ENCODE measurements at regions of chr12 and their contacts with region 1.

Region 1: DNA sequence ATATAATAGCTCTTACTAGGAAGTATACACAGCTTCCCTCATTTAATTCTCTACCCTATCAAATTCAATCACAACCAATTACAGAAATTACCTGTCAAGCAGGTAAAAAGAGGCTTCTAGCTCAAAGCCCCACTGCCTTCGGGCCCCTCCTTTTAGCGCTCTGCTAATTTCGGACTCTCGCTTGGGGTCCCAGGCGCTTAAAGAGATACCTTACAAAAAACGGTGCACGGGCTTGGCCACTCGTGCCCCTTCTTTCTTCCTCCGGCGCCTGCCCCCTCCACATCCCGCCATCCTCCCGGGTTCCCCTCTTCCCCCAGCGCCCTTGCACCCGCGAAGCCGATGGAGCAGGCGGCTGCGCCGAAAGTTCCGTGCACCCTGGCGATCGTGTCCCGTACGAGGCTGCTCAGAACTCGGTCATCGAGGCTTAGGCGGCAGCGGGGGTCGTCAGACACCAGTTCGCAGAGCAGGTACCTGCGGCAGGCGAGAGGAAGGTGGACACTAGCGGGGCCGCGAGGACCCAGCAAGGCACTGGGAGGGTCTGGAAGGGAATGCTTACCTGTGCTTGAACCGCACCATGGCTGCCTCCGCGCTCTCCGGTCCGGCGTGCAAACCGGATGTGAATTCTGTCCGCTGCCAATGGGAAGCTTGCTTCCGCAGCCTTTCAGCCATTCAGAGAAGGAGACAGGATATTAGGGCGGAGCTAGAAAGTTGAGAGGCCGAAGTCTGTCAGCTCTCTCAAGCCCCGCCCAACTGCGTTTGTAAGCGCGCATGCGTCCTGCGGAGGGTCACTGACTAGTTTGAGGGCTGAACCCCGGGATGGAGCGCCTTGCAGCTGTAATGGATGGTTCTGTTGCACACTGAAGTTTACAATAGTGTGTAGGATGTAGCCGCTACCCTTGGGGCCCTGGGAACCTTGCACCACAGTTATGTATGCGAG is at the start of gene POP5:
- DNase-seq: peak; percentile 97
- H3K4me3 Mint-ChIP-seq: peak within 1 kb of the TSS; percentile 98
- H3K27ac Mint-ChIP-seq: peak within 1 kb of the TSS; percentile 89
- H3K4me1 Mint-ChIP-seq: peaks cover 41% of the 10 kb centered on the region
- H3K27me3 Mint-ChIP-seq: peaks cover 8% of the 10 kb centered on the region
- total RNA-seq, gene POP5: 44.2 to 45.0 TPM

Region 2: GRCh38 chr12:119512772-119513497 is 1068.1 kb before region 1 on chr12:
- CTCF ChIA-PET with region 1: no interaction called
- intact Hi-C with region 1: no loop called
- DNase-seq: peak; percentile 20
- H3K4me3 Mint-ChIP-seq: no peak overlapping the region
- H3K27ac Mint-ChIP-seq: no peak overlapping the region
- H3K4me1 Mint-ChIP-seq: no peaks in the 10 kb centered on the region
- H3K27me3 Mint-ChIP-seq: peaks cover 11% of the 10 kb centered on the region

Region 3: GRCh38 chr12:120356567-120357030 is 224.5 kb before region 1 on chr12:
- CTCF ChIA-PET with region 1: no interaction called
- intact Hi-C with region 1: loop called (anchors 5 kb)
- DNase-seq: peak; percentile 84
- H3K4me3 Mint-ChIP-seq: no peak overlapping the region
- H3K27ac Mint-ChIP-seq: no peak overlapping the region
- H3K4me1 Mint-ChIP-seq: peaks cover under 1% of the 10 kb centered on the region
- H3K27me3 Mint-ChIP-seq: peaks cover 15% of the 10 kb centered on the region

Region 4: GRCh38 chr12:120421701-120422100 is 159.4 kb before region 1 on chr12:
- CTCF ChIA-PET with region 1: no interaction called
- intact Hi-C with region 1: no loop called
- DNase-seq: no peak
- H3K4me3 Mint-ChIP-seq: no peak overlapping the region
- H3K27ac Mint-ChIP-seq: no peak overlapping the region
- H3K4me1 Mint-ChIP-seq: no peaks in the 10 kb centered on the region
- H3K27me3 Mint-ChIP-seq: no peaks in the 10 kb centered on the region

Region 5: GRCh38 chr12:120457133-120457532 is 123.9 kb before region 1 on chr12:
- CTCF ChIA-PET with region 1: no interaction called
- intact Hi-C with region 1: no loop called
- DNase-seq: no peak
- H3K4me3 Mint-ChIP-seq: no peak overlapping the region
- H3K27ac Mint-ChIP-seq: peak overlapping the region; percentile 28
- H3K4me1 Mint-ChIP-seq: peaks cover 3% of the 10 kb centered on the region
- H3K27me3 Mint-ChIP-seq: no peaks in the 10 kb centered on the region

Region 6: DNA sequence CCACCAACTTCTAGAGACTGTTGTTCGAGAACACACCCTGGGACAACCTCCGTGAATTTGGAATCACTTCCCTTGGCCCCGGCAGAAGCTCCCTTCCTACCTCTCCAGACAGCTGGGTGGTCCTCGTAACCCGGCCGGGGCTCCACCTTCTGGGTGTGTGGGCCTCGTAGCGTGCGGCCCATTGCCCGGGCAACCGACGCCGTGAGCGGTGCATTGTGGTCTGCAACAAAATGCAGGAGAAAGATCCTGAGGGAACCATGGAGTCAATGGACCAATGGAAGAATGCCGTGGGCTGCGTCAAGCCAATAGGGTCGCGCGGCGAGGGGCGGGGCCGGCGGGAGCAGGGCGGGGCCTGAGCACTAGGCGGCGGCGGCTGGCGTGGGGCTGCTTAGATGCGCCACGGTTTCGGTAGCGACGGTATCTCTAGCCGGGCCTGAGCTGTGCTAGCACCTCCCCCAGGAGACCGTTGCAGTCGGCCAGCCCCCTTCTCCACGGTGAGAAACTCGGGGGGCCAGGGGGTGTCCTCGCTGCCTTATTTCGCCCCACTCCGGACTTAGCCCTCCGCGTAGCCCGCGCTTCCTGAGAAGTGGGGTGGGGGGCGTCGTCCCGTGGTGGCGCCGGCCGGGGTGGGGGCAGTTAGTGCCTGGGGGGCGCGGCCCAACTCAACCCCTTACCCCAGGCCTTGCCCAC is 85.2 kb before region 1 on chr12 and contains the start of gene DYNLL1:
- CTCF ChIA-PET with region 1: no interaction called
- intact Hi-C with region 1: loop called (anchors 2 kb)
- DNase-seq: peak; percentile 97
- H3K4me3 Mint-ChIP-seq: peak within 1 kb of the TSS; percentile 84
- H3K27ac Mint-ChIP-seq: peak within 1 kb of the TSS; percentile 77
- H3K4me1 Mint-ChIP-seq: peaks cover 21% of the 10 kb centered on the region
- H3K27me3 Mint-ChIP-seq: no peaks in the 10 kb centered on the region
- total RNA-seq, gene DYNLL1: 93.4 to 93.5 TPM

Region 7: GRCh38 chr12:120686690-120687577 is 105.9 kb after region 1 on chr12 and contains the start of gene MLEC:
- CTCF ChIA-PET with region 1: interaction called, 14 read pairs
- intact Hi-C with region 1: loop called (anchors 1 kb)
- DNase-seq: peak; percentile 99
- H3K4me3 Mint-ChIP-seq: peak within 1 kb of the TSS; percentile 87
- H3K27ac Mint-ChIP-seq: peak within 1 kb of the TSS; percentile 91
- H3K4me1 Mint-ChIP-seq: peaks cover 42% of the 10 kb centered on the region
- H3K27me3 Mint-ChIP-seq: no peaks in the 10 kb centered on the region
- total RNA-seq, gene MLEC: 78.6 to 89.7 TPM

Region 8: GRCh38 chr12:120904197-120904773 is 323.2 kb after region 1 on chr12 and contains the start of gene SPPL3:
- CTCF ChIA-PET with region 1: no interaction called
- intact Hi-C with region 1: loop called (anchors 1 kb)
- DNase-seq: peak; percentile 91
- H3K4me3 Mint-ChIP-seq: peak within 1 kb of the TSS; percentile 99
- H3K27ac Mint-ChIP-seq: peak within 1 kb of the TSS; percentile 91
- H3K4me1 Mint-ChIP-seq: peaks cover 28% of the 10 kb centered on the region
- H3K27me3 Mint-ChIP-seq: no peaks in the 10 kb centered on the region
- total RNA-seq, gene SPPL3: 19.8 to 22.2 TPM

Region 9: GRCh38 chr12:121095544-121096198 is 514.6 kb after region 1 on chr12:
- CTCF ChIA-PET with region 1: no interaction called
- intact Hi-C with region 1: loop called (anchors 5 kb)
- DNase-seq: peak; percentile 85
- H3K4me3 Mint-ChIP-seq: peak overlapping the region; percentile 71
- H3K27ac Mint-ChIP-seq: no peak overlapping the region
- H3K4me1 Mint-ChIP-seq: peaks cover 33% of the 10 kb centered on the region
- H3K27me3 Mint-ChIP-seq: peaks cover 6% of the 10 kb centered on the region